ENCODE measurements at regions of chr15 and their contacts with region 1.

Region 1: GRCh38 chr15:68948951-68949526 is 18.7 kb downstream of the SPESP1 start:
- DNase-seq: no peak
- H3K4me3 Mint-ChIP-seq: no peak overlapping the region
- H3K27ac Mint-ChIP-seq: no peak overlapping the region
- H3K4me1 Mint-ChIP-seq: peaks cover 19% of the 10 kb centered on the region
- H3K27me3 Mint-ChIP-seq: peaks cover 19% of the 10 kb centered on the region
- CTCF ChIP-seq: no peak

Region 2: GRCh38 chr15:68829068-68829467 is 120.0 kb before region 1 on chr15:
- CTCF ChIA-PET with region 1: no interaction called
- intact Hi-C with region 1: no loop called
- DNase-seq: peak; percentile 15
- H3K4me3 Mint-ChIP-seq: no peak overlapping the region
- H3K27ac Mint-ChIP-seq: no peak overlapping the region
- H3K4me1 Mint-ChIP-seq: no peaks in the 10 kb centered on the region
- H3K27me3 Mint-ChIP-seq: peaks cover 42% of the 10 kb centered on the region
- CTCF ChIP-seq: no peak

Region 3: DNA sequence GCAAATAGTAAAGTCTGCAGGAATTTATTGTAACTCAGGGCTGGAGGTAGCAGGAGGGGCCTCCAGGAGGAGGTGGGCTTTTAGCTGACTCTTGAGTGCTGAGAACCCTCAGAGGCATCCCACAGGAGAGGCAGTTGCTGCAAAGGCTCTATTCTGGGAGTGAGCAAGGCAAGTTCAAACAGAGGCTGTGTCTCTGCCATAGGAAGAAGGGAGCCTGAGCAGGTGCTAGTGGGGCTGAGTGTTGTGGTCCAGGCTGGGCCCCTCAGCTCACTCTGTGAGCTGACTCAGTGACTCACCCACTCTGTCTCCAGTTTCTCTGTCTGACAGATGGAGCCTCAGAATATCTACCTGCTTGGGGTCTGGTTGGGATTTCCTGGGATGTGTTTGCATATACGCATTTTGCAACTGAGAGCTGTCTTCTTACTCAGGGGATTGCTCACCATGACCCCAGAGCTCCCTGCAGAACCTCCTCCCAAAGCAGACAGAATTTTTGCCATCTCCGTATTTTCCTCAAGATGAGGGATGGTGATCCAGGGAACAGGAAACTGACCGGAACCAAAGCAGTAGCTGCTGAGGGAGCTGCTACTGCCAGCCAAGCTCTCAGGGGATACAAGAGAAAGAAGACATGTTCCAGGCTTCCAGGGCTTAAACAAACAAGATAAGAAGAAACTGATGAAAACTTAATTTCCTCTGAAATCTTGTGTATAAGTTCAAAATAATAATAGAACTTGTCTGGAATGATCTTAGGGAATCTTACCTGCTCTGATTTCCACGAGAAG is 51.9 kb after region 1 on chr15:
- CTCF ChIA-PET with region 1: no interaction called
- intact Hi-C with region 1: no loop called
- DNase-seq: no peak
- H3K4me3 Mint-ChIP-seq: no peak overlapping the region
- H3K27ac Mint-ChIP-seq: no peak overlapping the region
- H3K4me1 Mint-ChIP-seq: no peaks in the 10 kb centered on the region
- H3K27me3 Mint-ChIP-seq: peaks cover 64% of the 10 kb centered on the region
- CTCF ChIP-seq: no peak

Region 4: GRCh38 chr15:70863450-70864218 is 1914.6 kb after region 1 on chr15:
- CTCF ChIA-PET with region 1: interaction called, 11 read pairs
- intact Hi-C with region 1: no loop called
- DNase-seq: peak; percentile 53
- H3K4me3 Mint-ChIP-seq: no peak overlapping the region
- H3K27ac Mint-ChIP-seq: peak overlapping the region; percentile 21
- H3K4me1 Mint-ChIP-seq: peaks cover 20% of the 10 kb centered on the region
- H3K27me3 Mint-ChIP-seq: no peaks in the 10 kb centered on the region
- CTCF ChIP-seq: no peak